ENCODE measurements at regions of chr12 and their contacts with region 1.

Region 1: DNA sequence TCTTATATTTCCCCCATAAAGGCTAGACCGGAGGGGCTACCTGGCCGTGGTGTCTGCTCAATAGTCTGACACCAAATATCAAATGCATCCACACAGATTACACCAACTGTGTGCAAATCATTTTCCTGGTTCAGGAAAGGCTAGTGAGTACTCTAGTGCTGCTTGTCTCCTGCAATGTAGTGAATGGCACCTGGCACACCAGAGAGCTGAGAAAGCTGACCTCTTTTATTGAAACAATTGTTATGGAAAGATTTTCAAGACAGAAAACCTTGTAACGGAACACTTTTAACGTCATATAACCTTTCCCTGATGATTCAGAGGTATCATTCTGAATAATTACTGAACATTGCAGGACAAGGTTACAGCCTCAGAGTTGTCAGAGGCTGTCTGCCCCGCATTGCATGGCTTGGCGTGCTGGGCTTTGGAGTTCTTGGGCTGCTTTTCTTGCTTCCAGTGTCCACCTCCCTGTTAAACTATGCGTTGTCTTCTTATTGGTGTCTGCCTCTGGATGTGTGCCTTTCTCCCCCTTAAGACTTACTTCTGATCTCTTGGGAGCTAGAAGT is 40.7 kb upstream of the HDAC7 start:
- DNase-seq: no peak
- H3K4me3 Mint-ChIP-seq: peak overlapping the region; percentile 53
- H3K27ac Mint-ChIP-seq: peak overlapping the region; percentile 99
- H3K4me1 Mint-ChIP-seq: peaks cover 63% of the 10 kb centered on the region
- H3K27me3 Mint-ChIP-seq: no peaks in the 10 kb centered on the region

Region 2: GRCh38 chr12:47832263-47832933 is 28.0 kb before region 1 on chr12:
- intact Hi-C with region 1: loop called (anchors 2 kb)
- DNase-seq: no peak
- H3K4me3 Mint-ChIP-seq: peak overlapping the region; percentile 76
- H3K27ac Mint-ChIP-seq: peak overlapping the region; percentile 98
- H3K4me1 Mint-ChIP-seq: peaks cover 76% of the 10 kb centered on the region
- H3K27me3 Mint-ChIP-seq: no peaks in the 10 kb centered on the region

Region 3: DNA sequence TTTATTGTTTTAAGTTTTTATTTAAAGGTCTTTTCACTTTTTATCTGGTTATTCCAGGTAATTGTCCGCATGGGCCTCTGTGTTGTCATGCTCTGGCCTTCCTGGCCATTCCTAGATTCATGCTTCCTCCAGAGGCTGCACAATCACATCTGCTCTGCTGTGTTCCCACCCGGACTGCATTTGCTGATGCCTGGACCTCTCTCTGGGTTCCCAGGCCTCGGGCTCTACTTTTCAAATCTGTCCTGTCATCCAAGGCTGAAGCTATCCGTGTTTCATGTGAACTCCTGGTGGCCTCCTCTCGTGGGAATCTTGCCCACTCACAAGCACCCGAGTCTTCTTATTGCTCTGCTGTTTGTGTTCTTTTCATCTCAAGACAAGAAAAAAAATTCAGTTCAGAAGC is 60.6 kb after region 1 on chr12:
- intact Hi-C with region 1: no loop called
- DNase-seq: no peak
- H3K4me3 Mint-ChIP-seq: no peak overlapping the region
- H3K27ac Mint-ChIP-seq: no peak overlapping the region
- H3K4me1 Mint-ChIP-seq: peaks cover 7% of the 10 kb centered on the region
- H3K27me3 Mint-ChIP-seq: peaks cover 35% of the 10 kb centered on the region

Region 4: GRCh38 chr12:47949441-47950308 is 89.3 kb after region 1 on chr12:
- intact Hi-C with region 1: loop called (anchors 1 kb)
- DNase-seq: peak; percentile 31
- H3K4me3 Mint-ChIP-seq: no peak overlapping the region
- H3K27ac Mint-ChIP-seq: peak overlapping the region; percentile 6
- H3K4me1 Mint-ChIP-seq: peaks cover 17% of the 10 kb centered on the region
- H3K27me3 Mint-ChIP-seq: no peaks in the 10 kb centered on the region

Measured in activated T-helper 2 cell treated with anti-CD3 and anti-CD28 coated beads, Interferon-gamma antibody, Interleukin-2, Interleukin-4, amounts not matched to agents 10 μg/mL and 5 μg/mL and 100 μg/mL, durations not matched to agents 14 hours and 24 hours and 36 hours (primary cell).